ENCODE measurements at regions of chr1 and their contacts with region 1.

Region 1: DNA sequence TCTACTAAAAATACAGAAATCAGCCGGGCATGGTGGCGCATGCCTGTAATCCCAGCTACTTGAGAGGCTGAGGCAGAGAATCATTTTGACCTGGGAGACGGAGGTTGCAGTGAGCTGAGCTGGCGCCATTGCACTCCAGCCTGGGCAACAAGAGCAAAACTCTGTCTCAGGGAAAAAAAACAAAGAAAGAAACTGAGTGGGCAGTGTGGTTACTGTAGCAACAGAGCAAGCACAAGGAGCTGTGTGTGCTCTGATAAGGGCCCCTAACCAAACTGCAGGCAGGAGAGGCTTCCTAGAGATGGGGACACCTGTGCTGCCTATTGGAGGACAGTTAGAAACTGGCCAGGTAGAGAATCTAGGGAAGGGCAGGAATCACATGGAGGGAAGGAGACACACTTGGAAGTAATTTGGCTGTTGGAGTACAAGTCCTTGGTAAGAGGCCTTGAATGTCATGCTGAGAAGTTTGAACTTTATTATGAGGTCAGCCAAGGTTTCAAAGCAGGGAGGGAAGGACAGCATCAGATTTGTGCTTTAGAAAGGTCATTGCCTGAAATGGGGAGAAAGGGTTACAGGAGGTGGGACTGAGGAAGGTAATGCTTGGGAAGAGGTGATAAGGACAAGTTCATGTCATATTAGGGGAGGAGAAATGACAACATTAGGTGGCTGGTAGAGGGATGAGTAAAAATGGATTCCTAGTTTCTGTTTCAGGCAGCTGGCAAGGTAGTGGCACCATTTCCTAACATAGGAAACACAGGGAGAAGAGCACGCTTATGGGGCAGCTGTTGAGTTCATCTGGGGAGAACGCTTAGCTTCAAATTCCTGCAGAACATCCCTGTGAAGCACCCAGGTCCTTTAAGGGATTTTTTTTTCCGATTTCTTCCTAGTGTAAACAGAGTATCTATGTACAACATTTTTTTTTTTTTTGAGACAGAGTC is 69.2 kb upstream of the ARTN start:
- DNase-seq: peak; percentile 25
- ATAC-seq: peak; percentile 42
- H3K4me3 Mint-ChIP-seq: no peak overlapping the region
- H3K27ac Mint-ChIP-seq: peak overlapping the region; percentile 53
- H3K4me1 Mint-ChIP-seq: peaks cover 38% of the 10 kb centered on the region
- H3K27me3 Mint-ChIP-seq: no peaks in the 10 kb centered on the region

Region 2: DNA sequence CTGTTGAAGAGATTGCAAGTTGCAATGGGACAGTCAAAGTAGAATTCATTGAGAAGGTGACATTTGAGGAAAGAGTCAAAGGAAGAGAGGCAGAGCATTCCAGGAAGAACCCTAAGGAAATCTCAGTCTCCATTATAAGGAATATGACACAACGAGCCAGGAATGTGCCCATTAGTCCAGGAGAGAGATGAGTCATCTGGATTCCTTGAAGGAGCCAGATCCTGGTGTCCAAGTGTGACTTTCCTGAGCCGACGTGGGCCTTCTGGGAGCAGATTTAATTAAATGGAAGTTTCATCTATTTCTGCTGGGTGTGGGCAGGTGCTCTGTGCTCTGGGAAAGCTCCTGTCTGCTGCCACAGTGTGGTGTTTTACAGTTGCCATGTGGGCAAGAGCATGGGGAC is 42.3 kb before region 1 on chr1:
- CTCF ChIA-PET with region 1: interaction called, 3 read pairs
- POLR2A ChIA-PET with region 1: interaction called, 11 read pairs
- intact Hi-C with region 1: no loop called
- DNase-seq: no peak
- ATAC-seq: no peak
- H3K4me3 Mint-ChIP-seq: no peak overlapping the region
- H3K27ac Mint-ChIP-seq: no peak overlapping the region
- H3K4me1 Mint-ChIP-seq: no peaks in the 10 kb centered on the region
- H3K27me3 Mint-ChIP-seq: no peaks in the 10 kb centered on the region

Region 3: GRCh38 chr1:43830807-43831206 is 33.6 kb before region 1 on chr1:
- CTCF ChIA-PET with region 1: no interaction called
- POLR2A ChIA-PET with region 1: no interaction called
- intact Hi-C with region 1: loop called in 1 of 2 experiments (anchors 1 kb)
- DNase-seq: no peak
- ATAC-seq: peak; percentile 27
- H3K4me3 Mint-ChIP-seq: no peak overlapping the region
- H3K27ac Mint-ChIP-seq: no peak overlapping the region
- H3K4me1 Mint-ChIP-seq: peaks cover 52% of the 10 kb centered on the region
- H3K27me3 Mint-ChIP-seq: no peaks in the 10 kb centered on the region